CD8-positive, alpha-beta T cell (primary cell): ENCODE measurements at regions of chr5 and their contacts with region 1.

Region 1: GRCh38 chr5:94316916-94317838 is 301.2 kb downstream of the KIAA0825 start:
- DNase-seq: no peak
- ATAC-seq: no peak
- H3K4me3 ChIP-seq: no peak overlapping the region
- H3K4me3 Mint-ChIP-seq: no peak overlapping the region
- H3K27ac ChIP-seq: no peak overlapping the region
- H3K27ac Mint-ChIP-seq: no peak overlapping the region
- H3K4me1 ChIP-seq: no peaks in the 10 kb centered on the region
- H3K4me1 Mint-ChIP-seq: no peaks in the 10 kb centered on the region
- H3K27me3 ChIP-seq: no peaks in the 10 kb centered on the region
- H3K27me3 Mint-ChIP-seq: no peaks in the 10 kb centered on the region
- CTCF ChIP-seq: no peak

Region 2: GRCh38 chr5:93006915-93007314 is 1310.3 kb before region 1 on chr5:
- CTCF ChIA-PET with region 1: no interaction called
- POLR2A ChIA-PET with region 1: no interaction called
- intact Hi-C with region 1: no loop called
- DNase-seq: no peak
- ATAC-seq: no peak
- H3K4me3 ChIP-seq: no peak overlapping the region
- H3K4me3 Mint-ChIP-seq: no peak overlapping the region
- H3K27ac ChIP-seq: no peak overlapping the region
- H3K27ac Mint-ChIP-seq: no peak overlapping the region
- H3K4me1 ChIP-seq: no peaks in the 10 kb centered on the region
- H3K4me1 Mint-ChIP-seq: no peaks in the 10 kb centered on the region
- H3K27me3 ChIP-seq: no peaks in the 10 kb centered on the region
- H3K27me3 Mint-ChIP-seq: no peaks in the 10 kb centered on the region
- CTCF ChIP-seq: no peak

Region 3: DNA sequence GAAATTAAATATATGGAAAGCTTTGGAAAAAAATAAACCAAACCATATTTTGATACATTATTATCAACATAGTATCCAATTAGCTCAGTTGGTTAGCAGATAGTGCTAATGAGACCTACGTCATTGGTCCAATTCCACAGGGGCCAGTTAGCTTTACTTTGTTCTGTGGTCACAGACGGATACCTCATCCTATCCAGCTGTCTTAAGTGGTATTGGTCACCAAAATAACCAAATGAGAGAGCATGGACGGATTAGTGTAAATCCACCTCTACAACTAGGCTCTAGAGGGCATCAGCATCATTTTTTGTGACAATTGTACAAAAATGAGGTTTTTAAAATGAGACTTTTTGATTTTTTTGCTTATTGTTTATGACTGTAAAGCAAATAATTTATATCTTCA is 63.0 kb before region 1 on chr5:
- CTCF ChIA-PET with region 1: no interaction called
- POLR2A ChIA-PET with region 1: no interaction called
- intact Hi-C with region 1: loop called in 1 of 2 experiments (anchors 10 kb)
- DNase-seq: no peak
- ATAC-seq: no peak
- H3K4me3 ChIP-seq: no peak overlapping the region
- H3K4me3 Mint-ChIP-seq: no peak overlapping the region
- H3K27ac ChIP-seq: no peak overlapping the region
- H3K27ac Mint-ChIP-seq: no peak overlapping the region
- H3K4me1 ChIP-seq: no peaks in the 10 kb centered on the region
- H3K4me1 Mint-ChIP-seq: no peaks in the 10 kb centered on the region
- H3K27me3 ChIP-seq: no peaks in the 10 kb centered on the region
- H3K27me3 Mint-ChIP-seq: no peaks in the 10 kb centered on the region
- CTCF ChIP-seq: no peak

Region 4: DNA sequence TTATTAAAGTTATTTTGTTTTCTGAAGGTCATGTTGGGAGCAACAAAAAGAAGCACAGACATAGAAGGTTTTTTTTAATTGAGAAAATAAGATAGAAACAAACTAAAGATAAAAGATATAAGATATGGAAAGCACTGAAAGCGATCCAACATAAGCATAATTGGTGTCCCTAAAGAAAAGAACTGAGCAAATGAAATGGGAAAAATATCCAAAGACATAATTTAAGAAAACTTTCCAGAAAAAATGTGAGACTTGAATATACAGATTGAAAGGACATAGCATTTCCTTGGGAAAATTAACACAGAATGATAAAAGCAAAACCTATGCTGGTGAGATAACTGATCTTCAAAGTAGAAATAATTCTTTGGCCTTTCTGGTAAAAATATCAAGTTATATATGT is 11.9 kb after region 1 on chr5:
- CTCF ChIA-PET with region 1: no interaction called
- POLR2A ChIA-PET with region 1: no interaction called
- intact Hi-C with region 1: loop called in 1 of 2 experiments (anchors 1 kb)
- DNase-seq: no peak
- ATAC-seq: no peak
- H3K4me3 ChIP-seq: no peak overlapping the region
- H3K4me3 Mint-ChIP-seq: no peak overlapping the region
- H3K27ac ChIP-seq: no peak overlapping the region
- H3K27ac Mint-ChIP-seq: no peak overlapping the region
- H3K4me1 ChIP-seq: no peaks in the 10 kb centered on the region
- H3K4me1 Mint-ChIP-seq: no peaks in the 10 kb centered on the region
- H3K27me3 ChIP-seq: no peaks in the 10 kb centered on the region
- H3K27me3 Mint-ChIP-seq: no peaks in the 10 kb centered on the region
- CTCF ChIP-seq: no peak